Psoas muscle (tissue), 8 donors: ENCODE measurements at regions of chr5 and their contacts with region 1.

Region 1: GRCh38 chr5:37814699-37815098 is 25.1 kb downstream of the GDNF start:
- DNase-seq: no peak
- ATAC-seq: no peak
- H3K4me3 ChIP-seq: no peak overlapping the region
- H3K27ac ChIP-seq: peak overlapping the region; percentile 84
- H3K4me1 ChIP-seq: no peaks in the 10 kb centered on the region
- H3K27me3 ChIP-seq: no peaks in the 10 kb centered on the region
- CTCF ChIP-seq: no peak

Region 2: DNA sequence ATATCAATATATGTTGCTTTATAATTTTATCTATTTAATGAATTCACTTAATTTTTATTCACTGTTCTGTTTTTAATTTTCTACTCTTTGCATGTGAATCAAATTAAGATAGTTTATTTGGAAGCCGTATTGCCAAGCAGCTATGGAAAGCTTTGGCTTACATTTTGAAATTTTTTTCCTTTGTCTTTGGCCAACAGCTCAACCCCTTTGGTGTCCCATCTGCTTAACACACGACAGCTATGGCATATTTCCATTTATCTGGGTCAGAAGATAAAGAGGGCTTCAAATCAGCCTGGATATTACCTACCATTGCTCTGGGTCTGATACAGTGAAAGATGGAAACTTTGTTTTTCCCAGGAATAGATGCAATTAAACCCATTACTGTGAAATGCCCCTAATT is 234.6 kb before region 1 on chr5:
- intact Hi-C with region 1: no loop called
- DNase-seq: no peak
- ATAC-seq: no peak
- H3K4me3 ChIP-seq: no peak overlapping the region
- H3K27ac ChIP-seq: no peak overlapping the region
- H3K4me1 ChIP-seq: peaks cover 5% of the 10 kb centered on the region
- H3K27me3 ChIP-seq: no peaks in the 10 kb centered on the region
- CTCF ChIP-seq: no peak

Region 3: DNA sequence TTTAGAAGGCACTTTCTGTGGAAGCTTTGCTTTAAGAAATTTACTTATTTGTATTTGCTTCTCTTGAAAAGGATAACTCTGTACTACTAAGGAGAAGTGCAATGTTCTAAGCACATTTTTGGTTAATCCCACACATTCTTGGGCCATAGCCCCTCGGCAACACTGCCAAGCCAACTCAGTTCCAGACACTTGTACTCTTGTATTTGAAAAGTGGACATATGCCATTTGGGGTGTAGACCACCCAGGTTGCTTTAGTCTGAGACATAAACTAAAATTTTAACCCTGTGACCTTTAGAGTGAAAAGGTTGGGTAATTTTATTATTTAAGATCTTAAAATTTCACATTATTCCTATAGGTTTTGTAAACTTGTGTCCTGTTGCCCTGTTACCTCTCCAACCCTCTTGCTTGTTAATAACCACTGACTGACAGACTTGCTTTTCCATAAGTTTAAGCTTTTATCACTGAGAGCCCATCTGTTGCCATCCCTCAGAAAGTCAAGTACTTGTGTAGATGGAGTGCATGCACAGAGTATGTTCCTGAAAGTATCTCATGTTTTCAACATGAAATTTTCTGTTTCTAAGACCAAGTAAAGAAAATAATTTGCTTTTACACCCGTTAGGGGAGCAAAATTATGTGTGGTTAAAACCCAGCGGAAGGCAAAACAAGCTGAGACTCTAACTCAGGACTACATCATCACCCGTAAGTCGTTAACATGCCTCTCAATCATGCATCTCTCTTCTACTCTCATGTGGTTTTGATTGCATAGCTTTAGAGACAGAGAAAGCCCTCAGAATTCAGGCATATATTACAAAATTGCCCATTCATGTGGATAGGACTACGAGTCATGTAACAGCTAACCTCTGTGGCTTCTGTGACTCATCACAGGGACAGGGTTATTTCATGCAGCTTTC is 92.2 kb before region 1 on chr5:
- intact Hi-C with region 1: loop called in 1 of 2 experiments (anchors 2 kb)
- DNase-seq: no peak
- ATAC-seq: no peak
- H3K4me3 ChIP-seq: no peak overlapping the region
- H3K27ac ChIP-seq: peak overlapping the region; percentile 85
- H3K4me1 ChIP-seq: peaks cover 55% of the 10 kb centered on the region
- H3K27me3 ChIP-seq: no peaks in the 10 kb centered on the region
- CTCF ChIP-seq: no peak

Region 4: DNA sequence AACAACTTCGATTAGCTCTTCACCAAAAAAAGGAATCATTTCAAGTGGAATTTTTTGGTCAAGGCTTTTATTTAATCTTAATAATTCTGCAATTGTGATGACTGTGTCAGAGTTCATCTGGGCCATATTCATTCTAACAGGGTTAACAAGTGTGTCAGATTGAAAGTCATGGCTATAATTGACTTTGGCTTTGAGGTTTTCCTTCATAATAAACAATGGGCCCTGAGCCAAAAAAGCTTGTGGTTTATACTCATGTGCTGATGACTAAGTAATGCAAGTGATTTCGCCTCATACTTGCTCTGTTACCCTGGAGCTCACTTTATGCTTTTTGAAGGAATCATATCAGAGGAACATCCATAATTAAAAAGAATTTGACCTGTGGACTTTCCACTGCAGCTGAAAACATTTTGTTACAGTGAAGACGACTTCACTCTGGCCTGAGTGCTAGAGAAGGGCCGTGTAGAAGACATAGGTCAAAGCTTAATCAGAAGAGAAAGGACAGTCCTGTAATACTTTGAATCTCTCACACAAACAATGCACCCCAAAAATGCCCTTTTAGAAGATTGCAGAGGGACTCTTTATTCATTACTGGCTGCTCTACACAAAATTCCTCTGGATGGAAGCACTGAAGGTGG is 76.5 kb before region 1 on chr5:
- intact Hi-C with region 1: loop called in 1 of 2 experiments (anchors 5 kb)
- DNase-seq: no peak
- ATAC-seq: peak; percentile 48 to 63 (median 58)
- H3K4me3 ChIP-seq: peak overlapping the region; percentile 37
- H3K27ac ChIP-seq: peak overlapping the region; percentile 86
- H3K4me1 ChIP-seq: peaks cover 49% of the 10 kb centered on the region
- H3K27me3 ChIP-seq: no peaks in the 10 kb centered on the region
- CTCF ChIP-seq: no peak

Region 5: GRCh38 chr5:38104497-38105230 is 290.0 kb after region 1 on chr5:
- intact Hi-C with region 1: no loop called
- DNase-seq: no peak
- ATAC-seq: no peak
- H3K4me3 ChIP-seq: no peak overlapping the region
- H3K27ac ChIP-seq: no peak overlapping the region
- H3K4me1 ChIP-seq: no peaks in the 10 kb centered on the region
- H3K27me3 ChIP-seq: no peaks in the 10 kb centered on the region
- CTCF ChIP-seq: no peak

Region 6: DNA sequence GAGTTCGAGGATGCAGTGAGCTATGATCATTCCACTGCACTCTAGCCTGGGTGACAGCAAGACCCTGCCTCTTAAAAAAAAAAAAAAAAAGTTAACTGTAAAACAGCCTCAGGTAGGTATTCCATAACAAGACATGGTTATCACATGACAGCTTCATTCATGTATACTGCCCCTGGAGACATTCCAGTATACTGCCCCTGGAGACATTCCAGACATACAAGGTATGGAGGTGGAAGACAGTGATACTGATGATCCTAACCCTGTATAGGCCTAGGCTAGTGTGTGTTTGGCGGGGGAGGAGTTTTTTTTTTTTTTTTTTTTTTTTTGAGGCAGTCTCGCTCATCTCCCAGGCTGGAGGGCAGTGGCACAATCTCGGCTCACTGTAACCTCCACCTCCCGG is 1154.0 kb after region 1 on chr5:
- intact Hi-C with region 1: no loop called
- DNase-seq: no peak
- ATAC-seq: peak in 1 of 4 donors; percentile 41
- H3K4me3 ChIP-seq: no peak overlapping the region
- H3K27ac ChIP-seq: no peak overlapping the region
- H3K4me1 ChIP-seq: no peaks in the 10 kb centered on the region
- H3K27me3 ChIP-seq: no peaks in the 10 kb centered on the region
- CTCF ChIP-seq: no peak